ENCODE measurements at regions of chr10 and their contacts with region 1.

Region 1: GRCh38 chr10:5147255-5147980 is 37.5 kb downstream of the AKR1C8 start:
- DNase-seq: peak; percentile 99
- ATAC-seq: peak; percentile 91
- H3K4me3 ChIP-seq: peak overlapping the region; percentile 27 to 66 (median 36); a peak in 5 of 6 replicates
- H3K27ac ChIP-seq: peak overlapping the region; percentile 100
- H3K4me1 ChIP-seq: peaks cover 61% of the 10 kb centered on the region
- H3K27me3 ChIP-seq: no peaks in the 10 kb centered on the region
- CTCF ChIP-seq: 0 out of 2 replicates have a peak, but pooled peaks have one; percentile 6
- EP300 ChIP-seq: peak; percentile 90 to 100
- POLR2A ChIP-seq: peak; percentile 68 to 89; a peak in 3 of 4 replicates
- RAD21 ChIP-seq: peak; percentile 31

Region 2: DNA sequence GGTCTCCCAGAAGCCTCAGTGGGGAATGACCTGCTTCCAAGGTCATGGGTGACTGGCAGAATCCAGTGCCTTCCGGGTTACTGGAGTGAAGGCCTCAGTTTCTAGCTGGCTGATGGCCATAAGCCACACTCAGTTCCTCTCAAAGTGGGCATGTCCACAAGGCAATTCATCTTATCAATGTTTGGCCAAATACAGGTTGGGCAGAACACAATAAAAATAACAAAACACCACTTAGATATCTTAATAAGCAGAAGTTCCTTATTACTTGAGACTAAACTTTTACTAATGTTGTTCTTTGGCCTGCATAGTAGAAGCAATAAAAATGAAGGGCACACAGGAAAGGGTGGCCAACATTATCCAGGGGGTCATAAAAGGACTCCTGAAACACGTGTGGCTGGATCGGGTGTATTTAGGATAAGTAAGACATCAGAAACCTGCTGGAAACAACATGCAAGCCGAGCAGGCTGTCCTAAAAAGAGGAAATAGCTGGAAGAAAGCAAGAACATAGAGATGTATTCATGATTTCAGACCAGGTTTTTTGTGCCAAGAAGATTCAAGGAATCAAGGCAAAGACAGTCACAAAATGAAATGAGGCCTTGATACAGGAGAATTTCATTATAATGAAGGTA is 124.1 kb before region 1 on chr10:
- CTCF ChIA-PET with region 1: no interaction called
- POLR2A ChIA-PET with region 1: no interaction called
- in situ Hi-C with region 1: no loop called
- intact Hi-C with region 1: no loop called
- DNase-seq: no peak
- ATAC-seq: no peak
- H3K4me3 ChIP-seq: no peak overlapping the region
- H3K27ac ChIP-seq: no peak overlapping the region
- H3K4me1 ChIP-seq: peaks cover 47% of the 10 kb centered on the region
- H3K27me3 ChIP-seq: no peaks in the 10 kb centered on the region
- CTCF ChIP-seq: no peak
- EP300 ChIP-seq: no peak
- POLR2A ChIP-seq: no peak
- RAD21 ChIP-seq: no peak

Region 3: DNA sequence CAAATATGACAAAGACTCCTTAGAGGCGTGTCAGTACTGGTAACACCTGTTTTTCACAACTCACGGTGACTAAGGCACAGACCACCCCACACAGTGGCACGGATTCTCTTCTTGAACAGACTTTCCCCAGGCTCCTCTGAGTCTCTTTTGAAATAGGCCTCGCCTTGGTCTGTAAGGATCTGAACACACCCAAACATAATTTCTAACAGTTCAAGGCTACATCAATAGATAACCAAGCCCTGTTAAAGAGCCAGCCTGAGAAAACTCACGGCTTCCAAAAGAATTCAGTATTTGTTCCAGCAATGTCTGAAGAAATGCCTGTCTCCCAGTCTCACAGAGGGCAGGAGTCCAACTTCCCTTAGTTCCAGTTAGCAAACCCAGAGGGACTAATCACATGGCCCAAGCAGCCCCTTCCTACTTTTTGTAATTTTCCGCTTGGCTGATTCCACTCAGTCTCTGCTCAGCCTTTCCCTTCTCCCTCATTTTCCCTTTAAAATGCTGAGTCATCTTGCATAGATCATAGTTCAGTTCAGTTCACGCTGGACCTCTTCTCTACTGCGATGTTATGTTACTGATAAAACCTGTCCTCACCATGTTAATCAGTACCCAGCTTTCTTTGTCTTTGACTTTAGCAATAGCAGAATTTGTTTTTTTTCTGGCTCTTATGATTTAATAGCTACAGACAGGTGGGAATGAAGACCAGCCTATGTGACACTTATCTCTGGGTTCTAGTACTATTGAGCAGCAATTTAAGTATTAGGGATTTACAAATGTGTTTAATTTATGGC is 75.8 kb before region 1 on chr10:
- CTCF ChIA-PET with region 1: no interaction called
- POLR2A ChIA-PET with region 1: interaction called, 4 read pairs
- in situ Hi-C with region 1: no loop called
- intact Hi-C with region 1: loop called (anchors 1 kb)
- DNase-seq: peak; percentile 100
- ATAC-seq: peak; percentile 89
- H3K4me3 ChIP-seq: peak overlapping the region; percentile 27 to 47 (median 30); a peak in 4 of 6 replicates
- H3K27ac ChIP-seq: peak overlapping the region; percentile 99
- H3K4me1 ChIP-seq: peaks cover 80% of the 10 kb centered on the region
- H3K27me3 ChIP-seq: no peaks in the 10 kb centered on the region
- CTCF ChIP-seq: no peak
- EP300 ChIP-seq: peak; percentile 94 to 98
- POLR2A ChIP-seq: peak; percentile 12 to 26; a peak in 3 of 4 replicates
- RAD21 ChIP-seq: no peak

Region 4: GRCh38 chr10:5234106-5234860 is 86.9 kb after region 1 on chr10:
- CTCF ChIA-PET with region 1: no interaction called
- POLR2A ChIA-PET with region 1: interaction called, 14 read pairs
- in situ Hi-C with region 1: no loop called
- intact Hi-C with region 1: no loop called
- DNase-seq: peak; percentile 91
- ATAC-seq: peak; percentile 94
- H3K4me3 ChIP-seq: no peak overlapping the region
- H3K27ac ChIP-seq: peak overlapping the region; percentile 55
- H3K4me1 ChIP-seq: peaks cover 37% of the 10 kb centered on the region
- H3K27me3 ChIP-seq: no peaks in the 10 kb centered on the region
- CTCF ChIP-seq: no peak
- EP300 ChIP-seq: peak in 1 of 2 experiments; percentile 84; a peak in 2 of 4 replicates
- POLR2A ChIP-seq: no peak
- RAD21 ChIP-seq: no peak

Region 5: GRCh38 chr10:5243521-5243987 is 96.1 kb after region 1 on chr10:
- CTCF ChIA-PET with region 1: no interaction called
- POLR2A ChIA-PET with region 1: no interaction called
- in situ Hi-C with region 1: no loop called
- intact Hi-C with region 1: loop called (anchors 5 kb)
- DNase-seq: peak; percentile 93
- ATAC-seq: peak; percentile 97
- H3K4me3 ChIP-seq: no peak overlapping the region
- H3K27ac ChIP-seq: peak overlapping the region; percentile 82
- H3K4me1 ChIP-seq: peaks cover 33% of the 10 kb centered on the region
- H3K27me3 ChIP-seq: no peaks in the 10 kb centered on the region
- CTCF ChIP-seq: no peak
- EP300 ChIP-seq: peak; percentile 23 to 98; a peak in 3 of 4 replicates
- POLR2A ChIP-seq: no peak
- RAD21 ChIP-seq: no peak

Measured in HepG2 (cell line).